ENCODE measurements at regions of chr9 and their contacts with region 1.

Region 1: GRCh38 chr9:109440797-109441287 is 57.3 kb downstream of the PTPN3 start:
- H3K4me3 ChIP-seq: no peak overlapping the region
- H3K27ac ChIP-seq: no peak overlapping the region
- H3K4me1 ChIP-seq: no peaks in the 10 kb centered on the region
- CTCF ChIP-seq: no peak

Region 2: DNA sequence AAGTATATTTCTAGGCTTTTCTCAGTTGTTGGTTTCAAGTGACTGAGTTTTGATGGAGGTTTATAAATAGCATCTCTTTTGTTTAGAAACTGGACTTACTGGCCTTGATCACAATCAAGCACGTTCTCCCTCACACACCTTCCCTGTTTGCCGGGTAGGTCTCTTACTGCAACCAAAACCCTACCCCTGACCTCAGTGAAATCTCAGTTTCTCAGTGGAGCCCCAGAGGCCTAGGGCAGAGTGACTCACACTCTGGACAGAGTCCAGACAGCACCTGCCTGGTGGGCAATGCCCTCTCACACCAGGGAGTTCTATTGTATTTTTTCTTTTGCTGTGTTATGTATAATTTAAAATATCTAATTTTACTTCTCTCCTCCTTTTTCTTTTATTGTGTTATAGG is 71.6 kb before region 1 on chr9:
- CTCF ChIA-PET with region 1: no interaction called
- POLR2A ChIA-PET with region 1: no interaction called
- H3K4me3 ChIP-seq: no peak overlapping the region
- H3K27ac ChIP-seq: no peak overlapping the region
- H3K4me1 ChIP-seq: no peaks in the 10 kb centered on the region
- CTCF ChIP-seq: no peak

Region 3: GRCh38 chr9:109422641-109423040 is 18.2 kb before region 1 on chr9:
- CTCF ChIA-PET with region 1: interaction called, 14 read pairs
- POLR2A ChIA-PET with region 1: no interaction called
- H3K4me3 ChIP-seq: no peak overlapping the region
- H3K27ac ChIP-seq: no peak overlapping the region
- H3K4me1 ChIP-seq: no peaks in the 10 kb centered on the region
- CTCF ChIP-seq: no peak

Region 4: DNA sequence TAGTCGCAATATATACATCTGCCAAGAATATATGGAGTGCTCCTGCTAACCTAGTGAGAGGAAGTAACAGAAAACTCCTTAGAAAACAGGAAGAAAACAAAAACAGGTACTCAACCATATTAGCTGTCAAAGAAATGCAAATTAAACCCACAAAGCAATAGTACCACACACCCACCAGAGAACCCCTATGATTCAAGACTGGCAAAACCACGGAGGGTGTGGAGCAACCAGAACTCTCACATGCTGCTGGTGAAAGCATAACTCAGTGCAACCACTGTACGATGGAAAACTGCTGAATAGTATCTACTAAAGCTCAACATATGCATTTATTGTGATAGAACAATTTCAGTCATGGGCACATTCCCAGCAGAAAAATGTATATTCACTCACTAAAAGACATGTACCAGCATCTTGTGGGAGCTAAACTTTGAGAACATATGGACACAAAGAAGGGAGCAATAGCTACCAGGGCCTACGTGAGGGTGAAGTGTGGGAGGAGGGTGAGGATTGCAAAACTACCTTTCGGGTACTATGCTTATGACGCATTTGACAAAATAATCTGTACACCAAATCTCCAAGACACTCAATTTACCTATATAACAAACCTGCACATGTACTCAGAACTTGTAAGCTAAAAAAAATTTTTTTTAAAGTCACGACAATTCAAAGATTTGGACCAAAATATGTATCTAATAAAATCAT is 23.2 kb after region 1 on chr9:
- CTCF ChIA-PET with region 1: interaction called, 140 read pairs
- POLR2A ChIA-PET with region 1: interaction called, 3 read pairs
- H3K4me3 ChIP-seq: no peak overlapping the region
- H3K27ac ChIP-seq: no peak overlapping the region
- H3K4me1 ChIP-seq: no peaks in the 10 kb centered on the region
- CTCF ChIP-seq: no peak

Region 5: GRCh38 chr9:109497226-109498153 is 56.6 kb after region 1 on chr9:
- CTCF ChIA-PET with region 1: interaction called, 10 read pairs
- POLR2A ChIA-PET with region 1: interaction called, 4 read pairs
- H3K4me3 ChIP-seq: peak overlapping the region; percentile 62
- H3K27ac ChIP-seq: peak overlapping the region; percentile 46; the same call in 1 of the 2 replicates
- H3K4me1 ChIP-seq: peaks cover 5% of the 10 kb centered on the region; the same call in 1 of the 2 replicates
- CTCF ChIP-seq: no peak